Activated B cell treated with CpG ODN at 0.5 μM for 24 hours (primary cell): ENCODE measurements at regions of chr14 and their contacts with region 1.

Region 1: GRCh38 chr14:56117765-56118610 is at the start of gene PELI2:
- DNase-seq: peak; percentile 83
- ATAC-seq: peak; percentile 83
- H3K4me3 Mint-ChIP-seq: peak within 1 kb of the TSS; percentile 95
- H3K27ac Mint-ChIP-seq: peak within 1 kb of the TSS; percentile 93
- H3K4me1 Mint-ChIP-seq: peaks cover 54% of the 10 kb centered on the region
- H3K27me3 Mint-ChIP-seq: peaks cover 2% of the 10 kb centered on the region
- CTCF ChIP-seq: no peak
- total RNA-seq, gene PELI2: 5.5 and 6.1 TPM in 2 replicates

Region 2: GRCh38 chr14:55446218-55446654 is 671.8 kb before region 1 on chr14:
- CTCF ChIA-PET with region 1: no interaction called
- POLR2A ChIA-PET with region 1: no interaction called
- intact Hi-C with region 1: no loop called
- DNase-seq: no peak
- ATAC-seq: no peak
- H3K4me3 Mint-ChIP-seq: no peak overlapping the region
- H3K27ac Mint-ChIP-seq: no peak overlapping the region
- H3K4me1 Mint-ChIP-seq: no peaks in the 10 kb centered on the region
- H3K27me3 Mint-ChIP-seq: no peaks in the 10 kb centered on the region
- CTCF ChIP-seq: peak; percentile 37

Region 3: GRCh38 chr14:56004786-56005185 is 113.2 kb before region 1 on chr14:
- CTCF ChIA-PET with region 1: no interaction called
- POLR2A ChIA-PET with region 1: interaction called, 3 read pairs
- intact Hi-C with region 1: loop called (anchors 5 kb)
- DNase-seq: no peak
- ATAC-seq: peak; percentile 73
- H3K4me3 Mint-ChIP-seq: peak overlapping the region; percentile 73
- H3K27ac Mint-ChIP-seq: no peak overlapping the region
- H3K4me1 Mint-ChIP-seq: peaks cover 27% of the 10 kb centered on the region
- H3K27me3 Mint-ChIP-seq: peaks cover 6% of the 10 kb centered on the region
- CTCF ChIP-seq: no peak

Region 4: GRCh38 chr14:56579345-56580220 is 461.6 kb after region 1 on chr14 and contains the start of gene TMEM260:
- CTCF ChIA-PET with region 1: no interaction called
- POLR2A ChIA-PET with region 1: interaction called, 3 read pairs
- intact Hi-C with region 1: loop called (anchors 2 kb)
- DNase-seq: peak; percentile 87
- ATAC-seq: peak; percentile 94
- H3K4me3 Mint-ChIP-seq: peak within 1 kb of the TSS; percentile 90
- H3K27ac Mint-ChIP-seq: peak within 1 kb of the TSS; percentile 96
- H3K4me1 Mint-ChIP-seq: peaks cover 35% of the 10 kb centered on the region
- H3K27me3 Mint-ChIP-seq: no peaks in the 10 kb centered on the region
- CTCF ChIP-seq: peak; percentile 78
- total RNA-seq, gene TMEM260: 22.0 and 24.7 TPM in 2 replicates